MCF 10A (cell line): ENCODE measurements at regions of chr11 and their contacts with region 1.

Region 1: DNA sequence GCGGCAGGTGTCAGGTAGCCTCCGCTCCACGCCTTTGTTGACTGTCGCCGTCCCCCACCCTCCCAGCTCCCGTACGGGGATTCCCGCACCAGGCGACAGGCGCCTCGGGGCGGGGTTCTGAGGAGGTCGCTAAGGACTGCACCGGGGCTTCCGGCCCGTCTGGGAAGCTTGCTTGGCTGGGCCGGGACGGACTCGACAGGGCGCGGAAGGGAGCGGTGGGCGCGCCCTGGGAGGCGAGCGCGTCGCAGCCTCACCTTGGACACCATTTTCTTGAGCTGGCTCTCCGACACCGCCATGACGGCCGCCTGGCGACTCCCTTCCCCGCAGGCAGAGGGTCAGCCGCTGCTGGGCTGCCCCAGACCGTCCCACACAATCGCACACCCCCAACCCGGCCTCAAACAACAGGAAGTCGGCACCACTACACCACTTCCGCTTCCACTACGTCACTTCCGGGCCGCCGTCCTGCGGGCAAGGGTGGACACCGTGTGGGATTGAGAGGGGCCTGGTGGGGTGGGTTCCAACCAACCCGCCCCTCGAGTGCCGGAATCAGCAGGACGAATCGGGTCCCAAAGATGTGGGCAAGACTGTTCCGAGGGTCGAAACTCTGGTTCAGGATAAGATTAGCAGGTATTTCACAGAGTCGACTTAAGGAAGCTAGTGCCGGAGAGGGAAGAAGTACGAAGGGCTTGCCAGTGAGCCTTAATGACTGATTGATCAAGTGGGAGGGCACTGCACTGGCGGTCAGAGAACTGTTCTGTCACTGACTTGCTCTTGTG is at the start of gene TSG101:
- DNase-seq: peak; percentile 92
- H3K4me3 Mint-ChIP-seq: peak within 1 kb of the TSS; percentile 91
- H3K27ac Mint-ChIP-seq: peak within 1 kb of the TSS; percentile 99
- H3K4me1 Mint-ChIP-seq: peaks cover 31% of the 10 kb centered on the region
- H3K27me3 Mint-ChIP-seq: no peaks in the 10 kb centered on the region
- CTCF ChIP-seq: no peak
- total RNA-seq, gene TSG101: 70.8 and 78.4 TPM in 2 replicates

Region 2: DNA sequence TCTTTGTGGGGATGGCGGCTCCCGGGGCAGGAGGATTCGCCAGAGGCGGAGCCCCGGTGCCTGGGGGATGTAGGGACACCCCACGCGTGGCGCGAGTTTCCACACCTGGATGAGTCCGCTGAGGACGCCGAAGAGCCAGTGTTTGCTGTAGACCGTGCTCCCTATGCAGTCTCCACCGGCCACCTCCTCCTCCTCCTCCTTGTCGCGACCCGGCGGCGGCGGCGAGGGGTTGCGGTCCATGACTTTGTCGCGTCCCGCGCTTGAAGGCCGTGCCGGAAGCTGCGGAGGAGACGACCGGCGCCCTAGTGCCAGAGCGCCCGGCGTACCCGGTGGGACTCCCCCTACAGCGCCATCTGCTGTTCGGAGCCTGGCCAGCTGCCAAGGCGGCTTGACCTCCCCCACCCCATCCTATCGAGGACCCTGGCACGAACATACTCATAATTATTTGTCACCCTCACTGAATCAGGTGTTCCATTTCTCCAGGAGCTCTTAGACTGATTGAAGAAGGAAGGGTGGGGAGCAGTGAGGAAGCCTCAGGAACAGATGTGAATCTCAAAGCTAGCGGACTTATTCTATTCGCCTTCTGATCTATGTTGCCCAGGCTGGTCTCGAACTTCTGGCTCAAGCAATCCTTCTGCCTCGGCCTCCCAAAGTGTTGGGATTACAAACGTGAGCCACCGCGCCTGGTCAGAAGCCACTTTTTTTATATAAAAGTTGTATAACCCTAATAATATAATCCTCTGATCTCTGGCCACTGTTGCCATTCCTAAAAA is 420.7 kb before region 1 on chr11 and contains the start of gene SAAL1:
- CTCF ChIA-PET with region 1: interaction called, 3 read pairs
- POLR2A ChIA-PET with region 1: interaction called, 11 read pairs
- intact Hi-C with region 1: no loop called
- DNase-seq: peak; percentile 82
- H3K4me3 Mint-ChIP-seq: peak within 1 kb of the TSS; percentile 94
- H3K27ac Mint-ChIP-seq: peak within 1 kb of the TSS; percentile 87
- H3K4me1 Mint-ChIP-seq: peaks cover 19% of the 10 kb centered on the region
- H3K27me3 Mint-ChIP-seq: peaks cover 16% of the 10 kb centered on the region
- CTCF ChIP-seq: peak; percentile 68
- total RNA-seq, gene SAAL1: 21.6 and 34.3 TPM in 2 replicates

Region 3: DNA sequence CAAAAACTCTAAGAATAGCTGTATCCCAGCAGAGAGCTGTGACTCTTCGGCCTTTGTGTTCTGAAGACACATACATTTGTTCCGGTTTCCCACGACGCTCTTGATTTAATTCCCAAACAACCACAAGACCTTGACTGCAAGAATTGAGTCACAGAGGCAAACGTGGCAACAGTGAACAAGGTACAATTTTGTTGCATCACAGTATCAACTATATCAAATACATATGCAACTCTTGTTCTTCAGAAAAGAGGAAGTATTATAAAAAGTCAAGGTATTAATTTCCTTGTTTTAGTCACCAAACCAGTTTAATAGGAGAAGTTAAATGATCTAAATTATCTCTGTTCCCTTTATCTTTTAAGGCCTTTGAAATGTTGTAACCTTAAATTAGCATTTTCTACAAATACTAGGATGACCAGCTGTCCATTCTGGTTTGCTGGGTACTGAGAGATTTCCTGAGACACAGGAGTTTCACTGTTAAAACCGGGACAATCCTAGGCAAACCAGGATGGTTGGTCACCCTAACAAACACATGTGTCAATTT is 215.8 kb before region 1 on chr11:
- CTCF ChIA-PET with region 1: no interaction called
- POLR2A ChIA-PET with region 1: interaction called, 15 read pairs
- intact Hi-C with region 1: no loop called
- DNase-seq: peak; percentile 88
- H3K4me3 Mint-ChIP-seq: peak overlapping the region; percentile 60
- H3K27ac Mint-ChIP-seq: peak overlapping the region; percentile 96
- H3K4me1 Mint-ChIP-seq: peaks cover 63% of the 10 kb centered on the region
- H3K27me3 Mint-ChIP-seq: no peaks in the 10 kb centered on the region
- CTCF ChIP-seq: no peak

Region 4: GRCh38 chr11:18321980-18322711 is 204.6 kb before region 1 on chr11 and contains the starts of genes GTF2H1 and HPS5:
- CTCF ChIA-PET with region 1: no interaction called
- POLR2A ChIA-PET with region 1: interaction called, 41 read pairs
- intact Hi-C with region 1: loop called (anchors 10 kb)
- DNase-seq: peak; percentile 99
- H3K4me3 Mint-ChIP-seq: peak within 1 kb of the TSS; percentile 92
- H3K27ac Mint-ChIP-seq: peak within 1 kb of the TSS; percentile 100
- H3K4me1 Mint-ChIP-seq: peaks cover 57% of the 10 kb centered on the region
- H3K27me3 Mint-ChIP-seq: no peaks in the 10 kb centered on the region
- CTCF ChIP-seq: no peak
- total RNA-seq, gene GTF2H1: 60.9 and 83.4 TPM in 2 replicates
- total RNA-seq, gene HPS5: 23.6 and 31.8 TPM in 2 replicates

Region 5: DNA sequence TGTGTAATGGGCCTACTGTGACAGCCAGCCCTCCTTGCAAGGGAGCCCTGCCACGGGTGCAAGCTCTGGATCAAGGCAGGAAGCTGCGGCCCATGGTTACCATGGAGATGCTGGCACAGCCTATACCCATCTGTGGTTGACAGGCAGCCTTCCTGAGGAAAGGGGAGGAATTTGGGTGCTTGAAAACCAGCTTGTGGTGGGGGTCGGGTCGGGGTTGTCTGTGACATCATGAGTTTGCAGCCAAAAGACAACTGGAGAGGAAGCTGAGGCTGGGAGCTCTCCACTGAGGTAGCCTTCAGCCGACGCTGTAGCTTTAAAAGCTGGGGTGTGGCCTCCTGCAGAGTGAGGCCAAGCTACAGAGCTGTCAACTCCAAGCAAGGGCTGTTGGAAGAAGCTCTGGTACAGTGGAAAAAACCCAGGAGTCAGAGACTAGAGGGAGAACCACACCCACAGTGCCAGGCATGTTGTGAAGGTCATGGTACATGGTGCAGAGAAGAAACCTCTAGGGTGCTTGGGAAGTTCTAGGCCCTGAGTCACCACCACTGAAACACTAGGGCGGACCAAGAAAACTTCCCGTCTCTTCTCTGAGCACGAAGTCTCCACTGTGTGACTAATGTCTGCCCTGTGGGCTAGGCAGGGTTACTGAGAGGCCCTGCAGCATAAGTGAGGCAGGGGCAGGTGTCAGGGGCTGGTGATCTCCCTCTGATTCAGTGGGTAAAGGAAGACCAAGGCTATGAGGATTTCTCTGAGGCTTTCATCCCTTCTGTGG is 143.1 kb before region 1 on chr11:
- CTCF ChIA-PET with region 1: no interaction called
- POLR2A ChIA-PET with region 1: interaction called, 22 read pairs
- intact Hi-C with region 1: no loop called
- DNase-seq: peak; percentile 100
- H3K4me3 Mint-ChIP-seq: peak overlapping the region; percentile 40
- H3K27ac Mint-ChIP-seq: peak overlapping the region; percentile 96
- H3K4me1 Mint-ChIP-seq: peaks cover 21% of the 10 kb centered on the region
- H3K27me3 Mint-ChIP-seq: no peaks in the 10 kb centered on the region
- CTCF ChIP-seq: no peak

Region 6: DNA sequence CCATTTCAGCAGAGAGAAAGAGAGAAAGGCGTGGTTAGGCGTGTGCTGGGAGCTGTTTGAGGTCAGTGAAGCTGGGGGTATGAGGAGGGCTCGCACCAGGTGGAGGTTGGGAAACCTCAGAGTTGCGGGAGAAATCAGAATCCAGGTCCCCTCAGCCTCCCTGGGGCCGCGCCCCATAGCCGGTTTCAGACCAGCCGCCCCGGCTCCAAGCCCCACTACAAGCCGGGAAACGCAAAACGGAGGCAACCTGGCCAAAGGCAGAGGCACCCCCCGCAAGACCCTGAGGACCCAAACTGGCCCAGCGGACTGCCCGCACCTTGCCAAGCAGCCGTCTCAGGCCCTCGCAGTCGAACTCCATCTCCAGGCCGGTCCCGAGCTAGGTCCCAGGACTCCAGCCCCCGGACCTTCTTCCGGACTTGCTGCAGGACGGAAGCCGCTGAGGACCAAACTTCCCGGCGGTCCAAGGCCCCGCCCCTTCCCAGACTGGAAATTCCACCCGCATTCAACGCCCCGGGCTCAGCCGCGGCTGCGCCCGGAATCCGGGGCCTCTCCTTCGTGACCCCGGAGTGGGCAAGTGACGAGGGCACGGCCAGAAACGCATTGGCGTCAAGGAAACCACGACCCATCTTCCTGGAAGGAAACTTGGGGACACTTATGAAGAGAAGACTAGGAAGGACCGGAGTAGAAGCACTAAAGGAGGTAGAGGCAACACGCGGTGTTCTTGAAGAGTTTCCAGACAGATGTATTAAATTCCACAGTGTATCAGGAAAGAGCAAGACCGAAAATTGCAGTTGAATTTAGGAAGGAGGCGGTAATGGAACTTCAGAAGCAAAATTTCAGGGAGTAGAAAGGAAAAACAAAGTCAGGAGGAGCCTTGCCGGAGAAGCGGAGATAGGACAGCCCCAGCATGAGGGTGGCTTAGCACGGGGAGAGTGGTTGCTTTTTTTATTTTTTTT is 61.9 kb after region 1 on chr11 and contains the start of gene UEVLD:
- CTCF ChIA-PET with region 1: no interaction called
- POLR2A ChIA-PET with region 1: interaction called, 31 read pairs
- intact Hi-C with region 1: loop called (anchors 2 kb)
- DNase-seq: peak; percentile 87
- H3K4me3 Mint-ChIP-seq: no peak within 1 kb of the TSS
- H3K27ac Mint-ChIP-seq: no peak within 1 kb of the TSS
- H3K4me1 Mint-ChIP-seq: no peaks in the 10 kb centered on the region
- H3K27me3 Mint-ChIP-seq: no peaks in the 10 kb centered on the region
- CTCF ChIP-seq: no peak
- total RNA-seq, gene UEVLD: 22.8 and 24.8 TPM in 2 replicates

Region 7: GRCh38 chr11:18634140-18635032 is 107.7 kb after region 1 on chr11 and contains the start of gene SPTY2D1:
- CTCF ChIA-PET with region 1: interaction called, 4 read pairs
- POLR2A ChIA-PET with region 1: interaction called, 34 read pairs
- intact Hi-C with region 1: no loop called
- DNase-seq: peak; percentile 99
- H3K4me3 Mint-ChIP-seq: peak within 1 kb of the TSS; percentile 91
- H3K27ac Mint-ChIP-seq: peak within 1 kb of the TSS; percentile 99
- H3K4me1 Mint-ChIP-seq: peaks cover 14% of the 10 kb centered on the region
- H3K27me3 Mint-ChIP-seq: no peaks in the 10 kb centered on the region
- CTCF ChIP-seq: no peak
- total RNA-seq, gene SPTY2D1: 26.8 and 30.2 TPM in 2 replicates